ENCODE measurements at regions of chr17 and their contacts with region 1.

Region 1: GRCh38 chr17:4903051-4903818 is at the start of gene CHRNE:
- DNase-seq: peak; percentile 90
- H3K4me3 ChIP-seq: no peak within 1 kb of the TSS
- H3K27ac ChIP-seq: peak within 1 kb of the TSS in 2 of 4 donors; percentile 43 to 50
- H3K4me1 ChIP-seq: peaks cover 0 to 39% (median 24%) of the 10 kb centered on the region in 4 donors
- H3K27me3 ChIP-seq: peaks cover 15% of the 10 kb centered on the region
- CTCF ChIP-seq: peak; percentile 77 to 88 (median 82)
- EP300 ChIP-seq: no peak
- POLR2A ChIP-seq: no peak
- total RNA-seq, gene CHRNE: 0.32 TPM in 1 of 4 donors, not detected in the others

Region 2: GRCh38 chr17:4739122-4740024 is 163.9 kb before region 1 on chr17 and contains the starts of genes CXCL16 and ZMYND15:
- in situ Hi-C with region 1: no loop called
- intact Hi-C with region 1: loop called (anchors 10 kb)
- DNase-seq: peak; percentile 83
- H3K4me3 ChIP-seq: peak within 1 kb of the TSS; percentile 63 to 94 (median 80)
- H3K27ac ChIP-seq: peak within 1 kb of the TSS; percentile 42 to 75 (median 72)
- H3K4me1 ChIP-seq: peaks cover 6 to 16% (median 13%) of the 10 kb centered on the region in 4 donors
- H3K27me3 ChIP-seq: peaks cover 2% of the 10 kb centered on the region
- CTCF ChIP-seq: peak in 1 of 5 experiments; percentile 10
- EP300 ChIP-seq: no peak
- POLR2A ChIP-seq: peak; percentile 53
- total RNA-seq, gene CXCL16: 13.0 to 72.6 (median 27.0) TPM
- total RNA-seq, gene ZMYND15: 0.82 to 1.4 TPM in 2 of 4 donors, not detected in the others

Region 3: DNA sequence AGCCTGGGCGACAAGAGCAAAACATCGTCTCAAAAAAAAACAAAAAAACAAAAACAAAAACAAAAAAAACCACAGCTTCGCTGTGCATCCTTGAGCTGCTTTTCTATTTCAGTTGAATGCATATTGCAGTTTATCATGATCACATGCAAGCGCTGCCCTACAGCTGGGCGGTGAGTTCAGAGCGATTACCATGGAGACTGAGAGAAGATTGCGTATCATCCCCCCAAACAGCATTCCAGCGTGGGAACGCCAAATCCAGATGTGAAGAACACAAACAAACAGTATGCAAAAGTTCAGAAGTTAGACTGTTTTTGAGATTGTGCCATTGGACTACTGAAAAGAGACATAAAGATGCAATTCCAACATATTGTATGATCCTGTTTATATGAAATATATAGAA is 147.0 kb after region 1 on chr17:
- in situ Hi-C with region 1: loop called in 2 of 4 experiments (anchors 25 kb)
- intact Hi-C with region 1: no loop called
- DNase-seq: no peak
- H3K4me3 ChIP-seq: no peak overlapping the region
- H3K27ac ChIP-seq: peak overlapping the region; percentile 74 to 84 (median 78)
- H3K4me1 ChIP-seq: peaks cover 9 to 41% (median 20%) of the 10 kb centered on the region in 4 donors
- H3K27me3 ChIP-seq: no peaks in the 10 kb centered on the region
- CTCF ChIP-seq: no peak
- EP300 ChIP-seq: no peak
- POLR2A ChIP-seq: no peak

Region 4: GRCh38 chr17:5381542-5381941 is 478.3 kb after region 1 on chr17:
- in situ Hi-C with region 1: no loop called
- intact Hi-C with region 1: no loop called
- DNase-seq: no peak
- H3K4me3 ChIP-seq: no peak overlapping the region
- H3K27ac ChIP-seq: no peak overlapping the region
- H3K4me1 ChIP-seq: no peaks in the 10 kb centered on the region
- H3K27me3 ChIP-seq: no peaks in the 10 kb centered on the region
- CTCF ChIP-seq: no peak
- EP300 ChIP-seq: no peak
- POLR2A ChIP-seq: no peak